Caco-2 (cell line): ENCODE measurements at regions of chr2 and their contacts with region 1.

Region 1: DNA sequence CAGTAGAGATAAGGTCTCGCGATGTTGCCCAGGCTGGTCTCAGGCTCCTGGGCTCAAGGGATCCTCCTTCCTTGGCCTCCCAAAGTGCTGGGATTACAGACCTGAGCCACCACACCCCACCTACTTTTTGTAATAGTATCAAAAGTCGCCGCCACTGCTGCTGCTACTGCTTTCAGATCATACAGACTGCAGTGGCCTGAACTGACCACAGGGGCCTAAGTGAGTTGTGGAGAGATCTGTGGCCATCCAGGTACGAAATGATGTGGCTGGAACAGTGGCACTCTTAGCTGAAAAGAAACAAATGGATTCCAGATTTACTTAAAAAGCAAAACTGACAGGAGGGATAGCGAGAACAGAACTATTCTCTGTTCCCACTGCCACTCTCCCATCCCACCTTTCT is 32.9 kb upstream of the POMC start:
- DNase-seq: no peak
- H3K4me3 ChIP-seq: no peak overlapping the region
- H3K4me3 Mint-ChIP-seq: no peak overlapping the region
- H3K27ac Mint-ChIP-seq: no peak overlapping the region
- H3K4me1 ChIP-seq: no peaks in the 10 kb centered on the region
- H3K4me1 Mint-ChIP-seq: peaks cover 6% of the 10 kb centered on the region
- H3K27me3 ChIP-seq: no peaks in the 10 kb centered on the region
- H3K27me3 Mint-ChIP-seq: no peaks in the 10 kb centered on the region
- CTCF ChIP-seq: peak; percentile 40

Region 2: DNA sequence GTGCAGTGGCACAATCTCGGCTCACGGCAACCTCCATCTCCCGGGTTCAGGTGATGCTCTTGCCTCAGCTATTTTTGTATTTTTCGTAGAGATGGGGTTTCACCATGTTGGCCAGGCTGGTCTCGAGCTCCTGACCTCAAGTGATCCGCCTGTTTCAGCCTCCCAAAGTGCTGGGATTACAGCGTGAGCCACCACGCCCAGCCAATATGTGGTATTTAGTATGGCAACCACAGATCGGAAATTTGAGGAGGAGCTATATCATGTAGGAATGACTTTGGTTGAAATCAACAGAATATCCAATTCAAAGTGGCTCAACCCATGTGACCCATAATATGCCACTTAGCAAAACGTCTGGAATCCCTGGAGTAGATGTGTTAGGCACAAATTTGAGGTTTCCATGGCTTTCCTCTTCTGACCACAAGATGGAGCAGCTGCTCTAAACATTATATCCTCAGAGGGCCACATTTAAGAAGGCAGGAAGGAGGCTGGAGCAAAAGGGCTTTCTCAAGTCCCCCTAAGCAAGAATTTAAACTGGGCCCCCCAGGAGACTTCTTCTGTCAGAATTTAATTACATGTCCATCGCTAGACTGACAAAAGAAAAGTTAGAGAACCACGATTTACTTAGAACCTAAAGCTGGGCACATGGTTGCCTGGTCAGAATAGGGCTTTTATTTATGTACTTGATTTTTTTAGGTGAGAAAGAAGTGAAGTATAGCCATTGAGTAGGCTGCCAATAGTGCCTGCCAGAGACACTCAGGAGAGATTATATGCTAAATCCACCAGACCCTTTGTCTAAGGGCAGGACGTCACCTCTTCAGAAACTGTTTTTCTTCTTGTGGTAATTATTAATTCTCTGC is 791.3 kb before region 1 on chr2:
- CTCF ChIA-PET with region 1: no interaction called
- POLR2A ChIA-PET with region 1: no interaction called
- intact Hi-C with region 1: loop called (anchors 10 kb)
- DNase-seq: peak; percentile 49 to 66
- H3K4me3 ChIP-seq: no peak overlapping the region
- H3K4me3 Mint-ChIP-seq: no peak overlapping the region
- H3K27ac Mint-ChIP-seq: no peak overlapping the region
- H3K4me1 ChIP-seq: no peaks in the 10 kb centered on the region
- H3K4me1 Mint-ChIP-seq: no peaks in the 10 kb centered on the region
- H3K27me3 ChIP-seq: no peaks in the 10 kb centered on the region
- H3K27me3 Mint-ChIP-seq: no peaks in the 10 kb centered on the region
- CTCF ChIP-seq: peak; percentile 80 to 90

Region 3: GRCh38 chr2:25041928-25042320 is 159.3 kb before region 1 on chr2 and contains the start of gene EFR3B:
- CTCF ChIA-PET with region 1: no interaction called
- POLR2A ChIA-PET with region 1: no interaction called
- intact Hi-C with region 1: loop called (anchors 10 kb)
- DNase-seq: peak; percentile 96 to 98
- H3K4me3 ChIP-seq: peak within 1 kb of the TSS; percentile 62
- H3K4me3 Mint-ChIP-seq: peak within 1 kb of the TSS; percentile 82
- H3K27ac Mint-ChIP-seq: peak within 1 kb of the TSS; percentile 11
- H3K4me1 ChIP-seq: peaks cover 5% of the 10 kb centered on the region; the same call in 1 of the 2 replicates
- H3K4me1 Mint-ChIP-seq: peaks cover 12% of the 10 kb centered on the region
- H3K27me3 ChIP-seq: no peaks in the 10 kb centered on the region
- H3K27me3 Mint-ChIP-seq: no peaks in the 10 kb centered on the region
- CTCF ChIP-seq: no peak
- total RNA-seq, gene EFR3B: 14.5 and 19.1 TPM in 2 replicates

Region 4: GRCh38 chr2:25131567-25132298 is 69.5 kb before region 1 on chr2:
- CTCF ChIA-PET with region 1: no interaction called
- POLR2A ChIA-PET with region 1: no interaction called
- intact Hi-C with region 1: loop called (anchors 1 kb)
- DNase-seq: peak; percentile 55 to 76
- H3K4me3 ChIP-seq: peak overlapping the region; percentile 27
- H3K4me3 Mint-ChIP-seq: peak overlapping the region; percentile 76
- H3K27ac Mint-ChIP-seq: peak overlapping the region; percentile 49
- H3K4me1 ChIP-seq: peaks cover 16% of the 10 kb centered on the region
- H3K4me1 Mint-ChIP-seq: peaks cover 20% of the 10 kb centered on the region
- H3K27me3 ChIP-seq: no peaks in the 10 kb centered on the region
- H3K27me3 Mint-ChIP-seq: no peaks in the 10 kb centered on the region
- CTCF ChIP-seq: no peak

Region 5: GRCh38 chr2:25149646-25150045 is 51.6 kb before region 1 on chr2:
- CTCF ChIA-PET with region 1: no interaction called
- POLR2A ChIA-PET with region 1: no interaction called
- intact Hi-C with region 1: no loop called
- DNase-seq: no peak
- H3K4me3 ChIP-seq: no peak overlapping the region
- H3K4me3 Mint-ChIP-seq: no peak overlapping the region
- H3K27ac Mint-ChIP-seq: no peak overlapping the region
- H3K4me1 ChIP-seq: no peaks in the 10 kb centered on the region
- H3K4me1 Mint-ChIP-seq: no peaks in the 10 kb centered on the region
- H3K27me3 ChIP-seq: no peaks in the 10 kb centered on the region
- H3K27me3 Mint-ChIP-seq: no peaks in the 10 kb centered on the region
- CTCF ChIP-seq: no peak

Region 6: DNA sequence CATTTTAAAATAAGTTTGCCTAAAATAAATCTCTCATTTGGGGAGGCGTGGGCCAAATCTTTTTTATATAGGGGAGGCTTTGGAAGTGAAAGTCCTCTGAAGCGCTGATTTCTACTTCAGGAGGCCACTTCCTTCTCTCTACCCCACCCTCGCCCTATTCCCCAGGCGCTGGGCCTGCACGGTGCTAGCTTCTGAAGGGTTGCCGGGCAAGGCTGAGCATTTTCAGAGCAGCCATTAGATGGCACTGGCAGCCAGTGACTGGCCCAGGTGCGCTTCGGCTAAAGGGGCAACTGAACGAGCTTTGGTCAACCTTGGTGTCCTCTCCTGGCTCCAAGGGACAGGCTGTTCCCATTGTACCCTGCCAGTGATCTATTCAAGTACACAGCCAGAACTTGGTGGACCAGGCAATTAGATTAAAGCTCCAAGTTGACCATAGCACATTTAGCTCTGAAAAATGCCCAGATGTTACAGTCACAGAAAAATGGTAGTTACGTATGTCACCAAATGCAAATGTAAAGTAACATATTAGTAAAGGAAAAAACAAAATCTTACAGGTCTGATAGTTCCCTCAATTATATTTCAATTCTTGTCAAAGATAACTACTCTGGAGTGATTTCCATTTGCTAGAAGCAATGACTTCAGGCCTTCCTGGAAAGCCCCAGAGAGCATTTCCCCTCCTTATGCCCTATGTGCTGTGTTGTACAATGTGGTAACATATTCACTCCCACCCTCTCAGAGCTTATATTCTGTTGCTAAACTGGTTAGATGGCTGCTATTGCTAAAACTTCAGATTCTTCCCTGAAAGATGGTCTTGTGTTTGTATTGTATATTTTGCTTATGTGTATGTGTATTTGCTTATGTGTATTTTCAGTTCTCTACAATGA is 35.0 kb before region 1 on chr2:
- CTCF ChIA-PET with region 1: interaction called, 30 read pairs
- POLR2A ChIA-PET with region 1: interaction called, 3 read pairs
- intact Hi-C with region 1: loop called (anchors 1 kb)
- DNase-seq: peak; percentile 50 to 63
- H3K4me3 ChIP-seq: no peak overlapping the region
- H3K4me3 Mint-ChIP-seq: no peak overlapping the region
- H3K27ac Mint-ChIP-seq: no peak overlapping the region
- H3K4me1 ChIP-seq: peaks cover 6% of the 10 kb centered on the region; the same call in 1 of the 2 replicates
- H3K4me1 Mint-ChIP-seq: no peaks in the 10 kb centered on the region
- H3K27me3 ChIP-seq: no peaks in the 10 kb centered on the region
- H3K27me3 Mint-ChIP-seq: peaks cover 4% of the 10 kb centered on the region
- CTCF ChIP-seq: peak; percentile 47 to 52

Region 7: DNA sequence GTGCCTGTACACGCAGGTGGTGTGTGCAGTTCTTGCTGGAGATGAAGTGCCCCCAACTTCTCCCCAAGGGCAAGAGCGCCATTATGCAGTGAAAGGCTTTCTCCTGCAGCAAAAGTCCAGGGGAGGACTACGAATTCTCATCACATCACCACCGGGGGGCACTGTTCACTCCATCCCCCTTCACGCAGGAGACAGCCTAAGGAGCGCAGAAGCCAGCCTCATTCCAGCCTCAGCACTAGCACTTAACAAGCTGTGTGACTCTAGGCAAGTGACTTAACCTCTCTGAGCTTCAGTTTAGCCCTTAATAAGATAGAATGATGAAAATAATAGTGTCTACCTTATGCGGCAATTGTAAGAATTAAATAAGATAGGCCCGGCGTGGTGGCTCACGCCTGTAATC is 108.1 kb after region 1 on chr2:
- CTCF ChIA-PET with region 1: no interaction called
- POLR2A ChIA-PET with region 1: no interaction called
- intact Hi-C with region 1: no loop called
- DNase-seq: peak; percentile 58 to 68
- H3K4me3 ChIP-seq: no peak overlapping the region
- H3K4me3 Mint-ChIP-seq: no peak overlapping the region
- H3K27ac Mint-ChIP-seq: no peak overlapping the region
- H3K4me1 ChIP-seq: 0 out of 2 replicates have a peak, but pooled peaks cover 3% of the 10 kb centered on the region
- H3K4me1 Mint-ChIP-seq: peaks cover 5% of the 10 kb centered on the region
- H3K27me3 ChIP-seq: no peaks in the 10 kb centered on the region
- H3K27me3 Mint-ChIP-seq: no peaks in the 10 kb centered on the region
- CTCF ChIP-seq: peak; percentile 49 to 53

Region 8: DNA sequence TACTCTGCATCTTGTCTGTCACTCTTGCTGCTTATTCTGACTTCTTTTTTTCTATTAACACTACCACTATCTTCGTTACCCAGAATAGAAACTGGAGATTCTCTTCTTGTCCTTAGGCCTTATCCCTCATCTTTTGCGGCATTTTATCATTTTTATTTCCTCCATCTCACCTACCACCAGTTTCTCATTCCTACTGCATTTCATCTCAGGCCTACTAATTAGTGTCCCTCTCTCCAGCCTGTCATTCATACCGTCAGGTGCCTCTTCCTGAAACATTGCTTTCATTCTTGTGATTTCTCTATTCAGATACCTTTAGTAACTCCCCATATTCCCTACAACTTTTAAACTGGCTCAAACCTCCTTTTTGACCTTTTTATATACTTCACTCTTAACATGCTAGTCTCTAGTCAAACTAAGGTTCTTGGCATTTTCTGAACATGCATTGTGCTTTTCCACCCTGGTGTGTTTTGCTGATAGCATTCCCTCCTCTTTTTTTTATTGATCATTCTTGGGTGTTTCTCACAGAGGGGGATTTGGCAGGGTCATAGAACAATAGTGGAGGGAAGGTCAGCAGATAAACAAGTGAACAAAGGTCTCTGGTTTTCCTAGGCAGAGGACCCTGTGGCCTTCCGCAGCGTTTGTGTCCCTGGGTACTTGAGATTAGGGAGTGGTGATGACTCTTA is 1168.3 kb after region 1 on chr2:
- CTCF ChIA-PET with region 1: no interaction called
- POLR2A ChIA-PET with region 1: no interaction called
- intact Hi-C with region 1: no loop called
- DNase-seq: no peak
- H3K4me3 ChIP-seq: no peak overlapping the region
- H3K4me3 Mint-ChIP-seq: no peak overlapping the region
- H3K27ac Mint-ChIP-seq: no peak overlapping the region
- H3K4me1 ChIP-seq: no peaks in the 10 kb centered on the region
- H3K4me1 Mint-ChIP-seq: peaks cover 16% of the 10 kb centered on the region
- H3K27me3 ChIP-seq: no peaks in the 10 kb centered on the region
- H3K27me3 Mint-ChIP-seq: no peaks in the 10 kb centered on the region
- CTCF ChIP-seq: no peak